ENCODE measurements at regions of chr10 and their contacts with region 1.

Region 1: DNA sequence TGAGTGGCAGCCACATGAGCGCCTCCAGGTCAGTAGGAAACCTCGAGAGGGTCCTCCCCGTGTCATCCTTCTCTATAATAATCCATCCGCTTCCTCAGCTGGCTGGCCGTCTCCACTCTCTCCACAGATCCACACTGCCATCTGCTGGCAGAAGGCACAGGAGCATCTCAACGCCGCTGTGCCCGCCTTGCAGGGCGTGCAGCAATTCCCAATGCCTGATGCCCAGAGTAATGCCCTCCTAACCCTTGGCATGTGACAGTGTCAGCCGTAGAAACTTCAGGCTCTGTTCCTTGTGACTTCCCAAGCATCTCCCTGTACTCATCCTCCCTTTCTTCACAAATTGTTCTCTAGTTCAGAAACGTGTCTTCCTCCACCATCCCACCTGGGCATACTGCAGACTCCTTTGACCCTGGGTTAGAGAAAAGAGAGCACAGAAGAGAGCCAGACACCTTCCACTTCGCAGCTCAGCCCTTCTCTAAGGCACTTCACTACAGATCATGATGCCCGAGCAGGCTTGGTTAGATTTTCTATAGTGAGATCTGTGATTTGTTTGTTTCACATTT is 70.8 kb downstream of the XPNPEP1 start:
- DNase-seq: peak; percentile 75
- CTCF ChIP-seq: peak; percentile 96

Region 2: GRCh38 chr10:109676703-109677102 is 175.9 kb before region 1 on chr10:
- CTCF ChIA-PET with region 1: no interaction called
- POLR2A ChIA-PET with region 1: no interaction called
- DNase-seq: no peak
- CTCF ChIP-seq: no peak

Region 3: GRCh38 chr10:109790647-109791046 is 61.9 kb before region 1 on chr10:
- CTCF ChIA-PET with region 1: no interaction called
- POLR2A ChIA-PET with region 1: no interaction called
- DNase-seq: no peak
- CTCF ChIP-seq: no peak

Region 4: DNA sequence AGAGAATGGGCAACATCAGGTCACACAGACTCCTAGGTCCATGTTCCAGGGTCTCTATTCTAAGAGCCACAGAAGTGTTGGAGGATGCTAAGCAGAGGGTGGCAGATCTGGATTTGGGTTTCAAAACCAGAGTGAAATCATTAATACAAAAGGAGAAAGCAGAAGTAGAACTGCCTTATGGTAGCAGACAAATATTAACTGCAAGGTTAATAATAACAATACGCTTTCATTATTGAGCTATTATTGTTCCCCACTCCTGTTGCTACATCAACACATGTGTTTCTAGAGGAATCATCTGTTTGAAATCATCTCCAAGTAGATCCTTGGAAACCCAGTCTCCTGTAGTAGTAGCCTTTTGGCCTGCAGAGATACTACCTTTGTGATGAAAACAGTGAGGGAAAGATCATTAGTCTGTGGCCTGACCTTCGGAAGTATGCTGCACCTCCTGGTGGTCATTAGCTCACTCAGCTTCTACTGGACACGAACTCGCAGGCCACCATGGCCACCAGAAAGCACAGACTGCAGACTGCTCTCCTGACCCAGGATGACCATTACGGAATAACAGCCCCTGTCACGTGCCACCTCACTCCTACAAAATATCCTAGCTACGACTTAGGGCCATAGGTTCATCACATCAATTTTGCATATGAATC is 13.8 kb before region 1 on chr10:
- CTCF ChIA-PET with region 1: interaction called, 10 read pairs
- POLR2A ChIA-PET with region 1: no interaction called
- DNase-seq: no peak
- CTCF ChIP-seq: no peak

Region 5: DNA sequence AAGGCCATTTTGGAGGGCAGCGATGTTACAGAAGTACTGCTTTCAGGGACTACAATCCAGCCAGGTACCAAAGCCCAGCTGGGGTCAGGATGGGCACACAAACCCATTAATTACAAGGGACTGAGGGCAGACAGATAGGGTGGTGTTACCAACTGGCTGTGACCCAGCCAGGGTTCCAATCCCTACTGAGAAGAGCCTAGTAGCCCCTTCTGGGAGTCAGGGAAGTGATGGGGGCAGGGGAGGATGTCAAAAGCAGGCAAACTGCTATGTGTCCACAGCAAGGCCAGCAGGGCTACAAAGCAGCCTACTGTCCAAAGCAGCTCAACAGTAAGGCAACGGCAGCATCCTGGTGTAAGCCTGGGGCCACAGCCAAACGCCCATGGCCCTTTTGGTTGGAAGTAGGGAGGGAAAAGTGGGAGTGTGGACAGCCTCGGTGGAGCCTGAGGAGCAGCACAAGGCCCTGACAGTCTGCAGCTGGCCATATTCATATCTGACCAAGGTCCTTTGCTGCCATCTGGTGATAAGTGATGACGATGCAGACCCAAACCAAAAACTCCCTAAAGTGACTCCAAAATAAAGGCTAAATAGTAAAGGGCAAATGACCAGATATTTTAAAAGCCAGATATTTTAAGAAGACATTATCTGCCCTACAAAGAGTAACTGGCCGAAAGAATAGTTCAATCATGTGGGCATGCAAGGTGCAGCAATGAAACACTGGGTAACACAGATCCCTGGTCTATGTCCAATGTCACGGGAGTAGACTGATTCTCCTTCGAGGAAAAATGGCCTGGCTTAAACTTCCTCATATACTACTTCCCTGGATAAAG is 13.8 kb after region 1 on chr10:
- CTCF ChIA-PET with region 1: interaction called, 11 read pairs
- POLR2A ChIA-PET with region 1: no interaction called
- DNase-seq: no peak
- CTCF ChIP-seq: peak; percentile 21

Region 6: DNA sequence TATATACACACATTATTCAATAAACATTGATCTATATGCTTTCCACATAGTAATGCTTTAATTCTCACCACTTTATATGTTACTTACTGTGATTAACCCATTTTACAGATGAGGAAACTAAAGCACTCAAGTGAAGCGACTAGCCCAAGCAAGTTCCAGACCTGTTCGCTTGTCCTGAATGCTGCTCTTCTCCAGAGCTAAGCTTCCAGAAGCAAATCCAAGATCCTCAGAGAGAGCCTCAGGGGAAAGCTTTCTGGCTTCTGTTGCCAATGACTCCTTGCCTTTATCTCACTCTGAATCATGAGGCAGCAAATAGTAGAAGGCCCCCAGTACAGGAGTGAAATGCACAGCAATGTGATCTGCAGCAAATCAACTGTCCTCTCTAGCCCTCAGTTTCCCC is 38.5 kb after region 1 on chr10:
- CTCF ChIA-PET with region 1: no interaction called
- POLR2A ChIA-PET with region 1: no interaction called
- DNase-seq: no peak
- CTCF ChIP-seq: no peak

Region 7: GRCh38 chr10:109939315-109939961 is 86.9 kb after region 1 on chr10:
- CTCF ChIA-PET with region 1: no interaction called
- POLR2A ChIA-PET with region 1: no interaction called
- DNase-seq: no peak
- CTCF ChIP-seq: no peak